ENCODE measurements at regions of chr12 and their contacts with region 1.

Region 1: DNA sequence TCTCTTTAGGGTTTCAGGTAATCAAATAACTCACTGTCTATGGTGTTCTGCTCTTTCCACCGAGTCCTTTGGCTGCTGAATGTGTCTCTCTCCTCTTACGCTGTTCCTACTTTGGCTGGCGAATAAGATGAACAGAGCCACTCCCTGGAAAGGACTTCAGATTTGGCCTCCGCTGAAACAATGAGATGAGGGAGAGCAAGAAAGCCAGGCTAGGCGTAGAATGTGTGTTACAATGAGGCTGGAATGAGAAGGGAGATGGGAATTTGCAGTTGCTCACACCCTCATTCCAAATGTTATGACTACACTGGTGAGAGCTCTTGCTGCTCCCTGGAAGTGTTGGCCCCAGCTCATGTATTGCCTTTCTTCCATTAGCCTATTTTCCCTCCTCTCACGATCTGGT is at the start of gene MFAP5:
- DNase-seq: no peak
- H3K4me3 ChIP-seq: no peak within 1 kb of the TSS
- H3K4me3 Mint-ChIP-seq: no peak within 1 kb of the TSS
- H3K27ac ChIP-seq: no peak within 1 kb of the TSS
- H3K27ac Mint-ChIP-seq: no peak within 1 kb of the TSS
- H3K4me1 ChIP-seq: no peaks in the 10 kb centered on the region
- H3K4me1 Mint-ChIP-seq: no peaks in the 10 kb centered on the region
- H3K27me3 ChIP-seq: no peaks in the 10 kb centered on the region
- H3K27me3 Mint-ChIP-seq: peaks cover 8 to 10% of the 10 kb centered on the region in 2 donors
- total RNA-seq, gene MFAP5: not detected

Region 2: GRCh38 chr12:8644345-8645248 is 18.0 kb before region 1 on chr12:
- CTCF ChIA-PET with region 1: interaction called, 14 read pairs
- POLR2A ChIA-PET with region 1: no interaction called
- DNase-seq: peak; percentile 9 to 70 (median 25)
- H3K4me3 ChIP-seq: peak overlapping the region; percentile 31
- H3K4me3 Mint-ChIP-seq: peak overlapping the region; percentile 33 to 85 (median 78)
- H3K27ac ChIP-seq: peak overlapping the region; percentile 41
- H3K27ac Mint-ChIP-seq: peak overlapping the region; percentile 83 to 95 (median 92)
- H3K4me1 ChIP-seq: peaks cover 26% of the 10 kb centered on the region
- H3K4me1 Mint-ChIP-seq: peaks cover 44 to 64% (median 55%) of the 10 kb centered on the region in 3 donors
- H3K27me3 ChIP-seq: no peaks in the 10 kb centered on the region
- H3K27me3 Mint-ChIP-seq: no peaks in the 10 kb centered on the region